GM12878 (cell line): ENCODE measurements at regions of chr19 and their contacts with region 1.

Region 1: DNA sequence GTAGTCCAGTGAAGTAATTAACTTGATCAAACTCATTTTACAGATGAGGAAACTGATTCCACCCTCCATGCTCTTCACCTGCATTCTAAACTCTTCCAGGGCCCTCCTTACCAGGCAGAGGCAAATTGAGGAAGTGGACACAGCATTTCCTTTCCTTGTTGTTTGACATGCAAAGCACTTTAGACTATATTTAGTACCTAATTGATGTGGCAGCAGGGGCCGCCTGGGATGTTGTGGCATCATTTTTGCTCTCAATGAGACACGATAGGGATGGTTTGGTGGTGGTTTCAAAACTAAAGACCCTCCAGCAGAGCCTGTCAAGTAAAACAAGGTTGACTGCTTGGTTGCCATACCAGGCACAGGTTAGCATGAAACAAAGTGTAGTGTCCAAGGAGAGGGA is 7.9 kb downstream of the SIPA1L3 start:
- DNase-seq: peak; percentile 77
- ATAC-seq: peak; percentile 70
- H3K4me3 ChIP-seq: peak overlapping the region; percentile 77
- H3K27ac ChIP-seq: peak overlapping the region; percentile 87
- H3K4me1 ChIP-seq: peaks cover 42% of the 10 kb centered on the region
- H3K27me3 ChIP-seq: no peaks in the 10 kb centered on the region
- CTCF ChIP-seq: no peak
- EP300 ChIP-seq: peak in 1 of 2 experiments; percentile 67; a peak in 2 of 4 replicates
- POLR2A ChIP-seq: peak; percentile 44; the same call in 1 of the 2 replicates
- RAD21 ChIP-seq: no peak

Region 2: GRCh38 chr19:37963190-37963936 is 48.5 kb after region 1 on chr19:
- CTCF ChIA-PET with region 1: interaction called, 4 read pairs
- POLR2A ChIA-PET with region 1: interaction called, 10 read pairs
- RAD21 ChIA-PET with region 1: no interaction called
- SMC1A ChIA-PET with region 1: interaction called, 45 read pairs
- in situ Hi-C with region 1: no loop called
- intact Hi-C with region 1: no loop called
- DNase-seq: no peak
- ATAC-seq: peak; percentile 59
- H3K4me3 ChIP-seq: no peak overlapping the region
- H3K27ac ChIP-seq: peak overlapping the region; percentile 45
- H3K4me1 ChIP-seq: peaks cover 45% of the 10 kb centered on the region
- H3K27me3 ChIP-seq: no peaks in the 10 kb centered on the region
- CTCF ChIP-seq: peak in 1 of 3 experiments; percentile 9; a peak in 1 of 6 replicates
- EP300 ChIP-seq: no peak
- POLR2A ChIP-seq: no peak
- RAD21 ChIP-seq: no peak

Region 3: DNA sequence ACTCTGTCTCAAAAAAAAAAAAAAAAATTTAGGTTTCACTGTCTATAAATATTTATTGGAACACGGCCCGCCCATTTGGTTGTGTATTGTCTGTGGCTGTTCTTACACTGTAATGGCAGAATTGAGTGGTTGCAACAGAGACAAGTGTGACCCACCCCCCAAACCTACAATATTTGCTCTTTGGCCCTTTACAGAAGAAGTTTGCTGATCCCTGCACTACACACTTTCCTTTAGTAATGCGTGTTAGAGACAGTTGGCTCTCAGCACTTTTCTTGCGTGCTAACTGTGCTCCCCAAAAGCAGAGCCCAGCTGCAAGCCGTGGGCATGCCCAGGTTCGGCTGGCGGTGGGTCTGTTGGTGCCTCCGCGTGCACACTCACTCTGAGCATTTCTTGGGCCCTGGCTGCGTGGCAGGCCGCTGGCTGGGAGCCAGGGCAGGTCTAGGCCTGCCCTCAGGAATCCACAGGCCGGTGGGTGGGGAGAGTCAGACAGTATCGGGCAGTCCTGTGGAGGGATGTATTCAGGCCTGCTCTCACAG is 64.7 kb after region 1 on chr19:
- CTCF ChIA-PET with region 1: interaction called, 183 read pairs
- POLR2A ChIA-PET with region 1: interaction called, 5 read pairs
- RAD21 ChIA-PET with region 1: interaction called, 6 read pairs
- SMC1A ChIA-PET with region 1: interaction called, 6 read pairs
- in situ Hi-C with region 1: loop called (anchors 5 kb)
- intact Hi-C with region 1: loop called (anchors 2 kb)
- DNase-seq: peak; percentile 69
- ATAC-seq: peak; percentile 46
- H3K4me3 ChIP-seq: peak overlapping the region; percentile 38; the same call in 1 of the 2 replicates
- H3K27ac ChIP-seq: peak overlapping the region; percentile 95
- H3K4me1 ChIP-seq: peaks cover 58% of the 10 kb centered on the region
- H3K27me3 ChIP-seq: no peaks in the 10 kb centered on the region
- CTCF ChIP-seq: no peak
- EP300 ChIP-seq: no peak
- POLR2A ChIP-seq: peak; percentile 57; the same call in 1 of the 2 replicates
- RAD21 ChIP-seq: no peak